H1 (cell line): ENCODE measurements at regions of chr3 and their contacts with region 1.

Region 1: DNA sequence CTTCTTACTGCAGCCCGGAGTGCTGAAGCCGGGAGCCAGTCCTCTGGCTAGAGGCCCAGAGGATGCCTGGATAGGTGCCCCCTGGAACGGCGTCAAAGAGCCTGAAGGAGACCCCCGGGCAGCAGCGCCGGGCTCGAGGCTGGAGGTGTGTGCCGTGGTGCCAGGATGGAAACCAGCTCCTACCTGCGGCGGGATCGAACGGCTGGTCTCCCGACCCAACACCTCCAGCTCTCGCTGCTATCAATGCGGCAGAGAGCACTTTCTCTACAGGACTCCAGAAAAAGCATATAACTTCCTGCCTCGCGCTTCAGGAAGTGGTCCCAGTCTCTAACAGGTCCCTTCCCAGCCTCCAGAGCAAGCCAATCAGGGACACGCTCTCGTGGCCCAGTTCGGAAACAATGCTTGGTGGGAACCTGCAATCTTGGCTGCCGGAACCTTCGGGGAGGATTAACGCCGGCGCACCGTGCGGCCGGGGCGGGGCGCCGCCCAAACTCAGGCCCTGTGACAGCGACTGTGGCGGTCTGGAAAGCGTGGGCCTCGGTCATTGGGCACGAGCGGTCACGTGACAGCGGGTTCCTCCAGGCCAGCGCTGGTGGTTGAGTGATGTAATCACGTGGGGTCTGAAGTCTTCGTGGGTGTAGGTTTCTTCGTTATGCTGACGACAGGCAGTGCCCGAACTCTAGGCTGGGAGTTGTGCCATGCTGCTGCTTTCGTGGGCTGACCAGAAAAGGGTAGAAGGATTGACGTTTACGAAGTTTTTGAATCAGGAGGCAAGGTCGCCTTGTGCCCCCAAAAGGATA is at the start of gene SLC33A1:
- DNase-seq: peak; percentile 97 to 98
- H3K4me3 ChIP-seq: peak within 1 kb of the TSS; percentile 85 to 96 (median 88)
- H3K27ac ChIP-seq: peak within 1 kb of the TSS; percentile 66
- H3K4me1 ChIP-seq: peaks cover 0 to 9% (median 3%) of the 10 kb centered on the region in 4 experiments; a peak in 4 of 7 replicates
- H3K27me3 ChIP-seq: no peaks in the 10 kb centered on the region
- CTCF ChIP-seq: no peak
- EP300 ChIP-seq: peak in 1 of 2 experiments; percentile 55; a peak in 1 of 3 replicates
- POLR2A ChIP-seq: peak; percentile 72 to 78
- RAD21 ChIP-seq: peak in 1 of 2 experiments; percentile 0; a peak in 1 of 4 replicates
- total RNA-seq, gene SLC33A1: 21.4 and 24.2 TPM in 2 replicates

Region 2: GRCh38 chr3:155870133-155870944 is 16.0 kb after region 1 on chr3 and contains the start of gene GMPS:
- CTCF ChIA-PET with region 1: interaction called, 10 read pairs
- POLR2A ChIA-PET with region 1: interaction called, 15 read pairs
- DNase-seq: peak; percentile 88 to 97
- H3K4me3 ChIP-seq: peak within 1 kb of the TSS; percentile 77 to 97 (median 88)
- H3K27ac ChIP-seq: peak within 1 kb of the TSS; percentile 89; the same call in 1 of the 2 replicates
- H3K4me1 ChIP-seq: peaks cover 0 to 5% (median 2%) of the 10 kb centered on the region in 4 experiments; a peak in 3 of 7 replicates
- H3K27me3 ChIP-seq: no peaks in the 10 kb centered on the region
- CTCF ChIP-seq: peak; percentile 56 to 71 (median 60)
- EP300 ChIP-seq: no peak
- POLR2A ChIP-seq: peak; percentile 84 to 85
- RAD21 ChIP-seq: peak; percentile 75 to 83
- total RNA-seq, gene GMPS: 161 and 175 TPM in 2 replicates